ENCODE measurements at regions of chr7 and their contacts with region 1.

Region 1: DNA sequence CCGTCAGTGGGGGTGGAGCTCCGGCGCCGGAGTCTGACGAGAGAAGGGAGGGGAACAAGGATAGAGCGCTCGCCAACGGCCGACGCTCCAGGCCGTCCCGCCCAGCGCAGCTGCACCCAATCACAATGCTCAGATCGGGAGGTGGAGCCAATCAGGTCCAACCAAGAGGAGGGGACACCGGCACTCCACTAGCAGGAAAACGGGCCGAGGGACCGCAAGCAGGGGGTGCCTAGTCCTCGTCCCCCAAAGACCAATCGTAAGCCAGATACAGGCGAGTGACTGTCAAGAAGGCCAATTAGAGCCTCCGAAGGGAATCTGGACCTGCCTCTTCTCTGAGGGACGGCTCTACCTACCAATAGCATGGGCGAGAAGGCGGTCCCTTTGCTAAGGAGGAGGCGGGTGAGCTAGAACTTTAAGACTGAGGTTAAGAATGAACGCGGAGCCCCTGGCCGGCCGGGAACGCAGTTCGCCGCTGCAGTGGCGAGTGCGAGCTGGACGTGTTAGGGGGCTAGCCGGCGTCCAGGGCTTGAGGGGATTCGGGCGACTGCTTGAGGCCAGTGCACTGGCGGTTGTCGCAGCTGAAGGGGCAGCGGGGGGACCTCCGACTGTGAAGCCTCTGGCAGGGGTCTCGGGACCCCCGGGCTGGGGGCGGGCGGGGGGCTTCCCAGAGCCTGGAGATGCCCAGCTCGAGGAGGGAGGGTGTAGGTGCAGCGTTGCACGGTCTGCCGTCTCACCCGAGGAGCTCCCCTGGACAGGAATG is at the start of gene FBXO24:
- DNase-seq: peak; percentile 100
- H3K4me3 Mint-ChIP-seq: peak within 1 kb of the TSS; percentile 85
- H3K27ac Mint-ChIP-seq: peak within 1 kb of the TSS; percentile 98
- H3K4me1 Mint-ChIP-seq: peaks cover 20% of the 10 kb centered on the region
- H3K27me3 Mint-ChIP-seq: peaks cover 2% of the 10 kb centered on the region
- total RNA-seq, gene FBXO24: 2.2 to 2.6 TPM

Region 2: DNA sequence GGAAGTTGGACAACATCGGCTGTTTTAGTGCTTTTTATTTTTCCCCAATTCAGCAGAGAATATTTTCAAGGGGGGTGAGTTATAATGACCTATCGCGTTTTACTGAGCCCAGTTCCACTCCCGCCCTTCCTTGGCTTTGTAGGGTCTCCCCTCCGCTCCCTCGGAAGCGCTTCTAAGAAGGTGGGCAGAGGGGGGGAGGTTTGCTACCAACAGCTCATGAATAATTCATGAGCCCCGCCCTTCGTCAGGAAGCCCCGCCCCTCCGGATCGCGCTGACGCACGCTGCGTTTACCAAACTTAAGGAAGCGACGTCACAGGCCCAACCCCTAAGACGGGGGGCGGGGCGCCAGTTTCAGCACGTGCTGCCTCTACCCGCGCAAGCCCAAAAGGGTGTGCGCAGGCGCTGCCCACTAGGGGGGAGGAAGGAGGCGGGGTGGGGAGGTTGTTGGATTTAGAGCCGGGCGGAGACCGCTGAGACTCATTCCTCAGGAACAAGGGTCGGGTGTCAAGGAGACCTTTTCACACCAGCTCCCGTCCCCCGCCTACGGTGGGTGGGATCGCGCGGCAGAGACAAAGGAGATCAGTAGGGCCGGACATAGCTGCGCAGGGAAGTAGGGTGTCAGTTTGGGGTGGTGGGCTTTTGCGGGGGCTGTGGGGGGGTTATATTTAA is 157.3 kb before region 1 on chr7:
- CTCF ChIA-PET with region 1: no interaction called
- POLR2A ChIA-PET with region 1: interaction called, 8 read pairs
- intact Hi-C with region 1: loop called (anchors 1 kb)
- DNase-seq: peak; percentile 100
- H3K4me3 Mint-ChIP-seq: peak overlapping the region; percentile 98
- H3K27ac Mint-ChIP-seq: peak overlapping the region; percentile 100
- H3K4me1 Mint-ChIP-seq: peaks cover 46% of the 10 kb centered on the region
- H3K27me3 Mint-ChIP-seq: peaks cover 8% of the 10 kb centered on the region

Region 3: DNA sequence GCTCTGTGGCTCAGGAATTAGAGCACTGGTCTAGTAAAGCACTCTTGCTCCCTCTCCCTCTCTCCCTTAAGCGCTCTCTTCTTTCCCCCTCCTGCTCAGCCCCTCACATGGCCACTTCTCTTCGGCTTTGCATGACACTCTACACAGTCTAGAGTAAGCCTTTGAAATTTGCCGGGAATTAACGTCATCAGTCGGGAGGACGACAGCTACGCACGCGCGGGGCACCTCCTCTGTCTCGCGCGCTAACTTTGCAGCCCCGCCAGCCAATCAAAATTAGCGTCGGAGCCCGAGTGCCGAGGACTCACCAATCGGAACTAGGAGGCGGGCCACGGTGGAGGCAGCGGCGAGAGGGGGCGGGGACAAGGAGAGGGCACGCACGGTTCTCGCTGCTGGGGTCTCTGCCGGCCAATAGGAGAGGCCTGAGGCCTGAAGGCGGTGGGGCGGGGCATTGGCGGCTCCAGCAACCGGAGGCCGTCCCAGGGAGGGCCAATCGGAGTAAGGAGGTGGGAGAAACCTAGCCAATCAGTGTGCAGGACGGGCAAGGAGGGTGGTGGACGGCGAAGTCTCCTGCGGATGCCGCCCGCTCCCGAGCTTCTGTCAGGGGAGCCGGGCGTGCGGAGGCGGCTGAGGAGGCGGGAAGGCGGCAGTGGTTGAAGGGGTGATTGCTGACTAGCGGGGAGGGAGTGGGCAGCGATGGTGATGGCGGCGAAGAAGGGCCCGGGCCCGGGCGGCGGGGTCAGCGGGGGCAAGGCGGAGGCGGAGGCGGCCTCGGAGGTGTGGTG is 47.6 kb before region 1 on chr7 and contains the start of gene AGFG2:
- CTCF ChIA-PET with region 1: interaction called, 3 read pairs
- POLR2A ChIA-PET with region 1: interaction called, 7 read pairs
- intact Hi-C with region 1: loop called (anchors 1 kb)
- DNase-seq: peak; percentile 100
- H3K4me3 Mint-ChIP-seq: peak within 1 kb of the TSS; percentile 95
- H3K27ac Mint-ChIP-seq: peak within 1 kb of the TSS; percentile 90
- H3K4me1 Mint-ChIP-seq: peaks cover 41% of the 10 kb centered on the region
- H3K27me3 Mint-ChIP-seq: no peaks in the 10 kb centered on the region
- total RNA-seq, gene AGFG2: 60.9 to 62.5 TPM

Region 4: GRCh38 chr7:100568896-100569844 is 17.3 kb before region 1 on chr7:
- CTCF ChIA-PET with region 1: interaction called, 24 read pairs
- POLR2A ChIA-PET with region 1: interaction called, 28 read pairs
- intact Hi-C with region 1: loop called (anchors 2 kb)
- DNase-seq: peak; percentile 72
- H3K4me3 Mint-ChIP-seq: peak overlapping the region; percentile 41
- H3K27ac Mint-ChIP-seq: peak overlapping the region; percentile 18
- H3K4me1 Mint-ChIP-seq: peaks cover 27% of the 10 kb centered on the region
- H3K27me3 Mint-ChIP-seq: no peaks in the 10 kb centered on the region

Region 5: DNA sequence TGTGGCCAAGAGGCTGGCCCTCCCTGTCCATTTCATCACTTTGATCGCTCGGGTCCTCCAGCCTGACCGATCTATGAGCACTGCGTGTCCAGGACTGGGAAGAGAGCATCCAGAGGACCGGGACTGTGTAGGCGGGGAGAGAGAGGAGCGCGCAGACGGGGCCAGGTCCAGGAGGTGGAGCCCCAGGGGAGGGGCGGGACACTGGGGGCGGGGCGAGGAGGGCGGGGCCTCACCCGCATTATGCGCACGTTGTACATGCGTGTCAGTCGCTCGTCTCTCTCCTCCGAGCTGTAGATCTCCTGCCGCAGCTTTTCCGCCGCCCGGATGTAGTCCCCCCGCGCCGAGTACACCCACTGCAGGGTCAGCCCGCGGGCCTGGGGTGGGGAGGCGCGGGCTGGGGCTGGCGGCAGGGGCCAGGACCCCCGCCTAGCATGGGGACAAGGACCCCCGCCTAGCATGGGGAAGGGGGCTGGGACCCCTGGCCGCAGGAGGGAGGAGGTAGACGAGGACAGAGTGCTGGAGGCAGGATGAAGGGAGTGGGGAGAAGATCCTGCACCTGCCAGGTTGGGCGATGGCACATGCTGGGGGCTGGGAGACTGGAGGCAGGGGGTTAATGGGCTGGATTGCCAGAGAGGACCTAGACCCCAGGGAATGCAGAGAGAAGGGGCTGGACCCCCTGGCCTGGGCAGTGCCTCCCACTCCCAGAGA is 40.2 kb after region 1 on chr7:
- CTCF ChIA-PET with region 1: interaction called, 24 read pairs
- POLR2A ChIA-PET with region 1: interaction called, 3 read pairs
- intact Hi-C with region 1: loop called (anchors 1 kb)
- DNase-seq: peak; percentile 96
- H3K4me3 Mint-ChIP-seq: peak overlapping the region; percentile 65
- H3K27ac Mint-ChIP-seq: peak overlapping the region; percentile 38
- H3K4me1 Mint-ChIP-seq: peaks cover 12% of the 10 kb centered on the region
- H3K27me3 Mint-ChIP-seq: no peaks in the 10 kb centered on the region

Region 6: DNA sequence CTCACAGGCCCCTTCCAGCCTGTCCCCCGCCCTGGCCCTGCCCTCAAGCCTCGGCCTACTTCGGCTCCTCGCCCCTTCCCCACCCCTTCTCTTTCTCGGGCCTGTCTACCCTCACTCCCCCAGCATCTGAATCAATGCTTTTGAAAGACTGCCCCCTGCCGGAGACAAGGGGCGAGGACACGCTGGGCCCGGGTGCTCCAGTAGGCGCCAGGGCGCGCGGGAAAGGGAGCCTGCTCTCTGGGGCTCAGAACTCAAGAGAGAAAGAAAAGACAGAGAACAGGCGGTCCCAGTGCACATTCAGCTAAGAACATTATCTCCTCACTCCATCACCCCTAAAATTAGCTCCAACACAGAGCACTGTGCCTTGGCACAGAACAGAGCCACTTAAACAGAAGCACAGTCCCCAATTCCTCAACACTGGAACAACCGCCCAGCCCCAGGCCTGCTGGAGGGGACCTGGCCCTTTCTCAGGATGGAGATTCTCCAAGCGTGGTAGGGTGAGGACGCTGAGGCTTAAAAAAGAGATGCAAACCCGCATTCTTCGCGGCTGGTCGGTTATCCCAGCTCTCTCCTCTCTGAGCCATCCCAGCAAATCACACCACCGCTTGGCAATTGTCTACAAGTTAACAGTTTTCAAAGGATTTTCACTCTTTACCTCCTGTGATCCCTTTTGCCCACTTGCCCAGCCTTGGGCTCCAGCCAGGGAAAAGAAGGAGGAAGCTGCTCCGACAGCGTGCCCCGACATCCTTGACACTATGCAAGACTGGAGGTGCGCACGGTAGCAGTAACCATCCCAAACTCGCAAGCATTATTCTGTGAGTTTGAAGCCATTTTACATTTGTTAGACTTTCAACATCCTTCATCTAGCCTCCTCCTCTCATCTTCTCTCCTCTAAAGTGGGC is 105.5 kb after region 1 on chr7:
- CTCF ChIA-PET with region 1: interaction called, 38 read pairs
- POLR2A ChIA-PET with region 1: interaction called, 3 read pairs
- intact Hi-C with region 1: loop called (anchors 5 kb)
- DNase-seq: peak; percentile 88
- H3K4me3 Mint-ChIP-seq: peak overlapping the region; percentile 93
- H3K27ac Mint-ChIP-seq: no peak overlapping the region
- H3K4me1 Mint-ChIP-seq: peaks cover 37% of the 10 kb centered on the region
- H3K27me3 Mint-ChIP-seq: no peaks in the 10 kb centered on the region